Breast epithelium (tissue), 4 donors: ENCODE measurements at regions of chr11 and their contacts with region 1.

Region 1: DNA sequence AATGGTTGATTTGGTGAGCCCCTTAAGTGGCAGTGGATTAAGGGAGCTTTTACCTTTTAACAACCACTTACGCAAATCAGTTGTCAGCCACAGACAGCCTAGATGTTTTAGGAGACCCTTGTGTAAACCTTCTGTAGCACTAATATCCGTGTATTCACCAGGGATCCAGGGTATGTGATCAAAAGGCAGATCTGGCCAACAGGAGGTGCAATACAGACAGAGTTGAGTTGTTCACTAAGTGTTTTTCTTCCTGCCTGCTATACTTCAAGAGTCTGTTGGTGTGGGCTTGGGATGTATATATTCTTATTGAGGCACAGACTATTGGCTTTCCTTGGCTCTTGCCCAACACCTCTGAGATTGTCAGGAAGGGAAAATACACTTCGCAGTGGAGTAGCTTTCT is 175.1 kb downstream of the FAT3 start:
- DNase-seq: no peak
- H3K4me3 ChIP-seq: no peak overlapping the region
- H3K27ac ChIP-seq: no peak overlapping the region
- H3K4me1 ChIP-seq: no peaks in the 10 kb centered on the region
- H3K27me3 ChIP-seq: no peaks in the 10 kb centered on the region
- CTCF ChIP-seq: no peak
- POLR2A ChIP-seq: no peak

Region 2: GRCh38 chr11:90675990-90676389 is 1723.7 kb before region 1 on chr11:
- intact Hi-C with region 1: loop called (anchors 5 kb)
- DNase-seq: no peak
- H3K4me3 ChIP-seq: no peak overlapping the region
- H3K27ac ChIP-seq: no peak overlapping the region
- H3K4me1 ChIP-seq: no peaks in the 10 kb centered on the region
- H3K27me3 ChIP-seq: no peaks in the 10 kb centered on the region
- CTCF ChIP-seq: no peak
- POLR2A ChIP-seq: no peak

Region 3: DNA sequence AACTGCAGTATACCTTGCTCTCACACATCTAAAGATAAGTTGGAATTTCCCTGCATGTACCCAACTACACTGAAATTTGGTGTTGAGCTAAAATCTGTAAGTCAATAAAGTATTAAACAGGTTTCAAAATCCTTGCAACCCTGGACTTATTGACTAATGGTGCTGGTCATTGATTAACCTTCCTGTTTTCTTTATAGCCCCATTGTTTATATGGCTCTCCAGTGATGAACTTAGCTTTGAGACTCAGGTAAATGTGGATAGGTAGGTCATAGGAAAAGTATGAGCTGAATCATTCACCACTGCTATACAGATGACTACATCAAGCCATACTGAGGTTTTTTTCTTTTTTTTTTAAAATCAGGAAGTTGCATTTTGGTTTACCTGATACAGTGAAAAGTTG is 42.4 kb before region 1 on chr11:
- intact Hi-C with region 1: no loop called
- DNase-seq: no peak
- H3K4me3 ChIP-seq: no peak overlapping the region
- H3K27ac ChIP-seq: no peak overlapping the region
- H3K4me1 ChIP-seq: no peaks in the 10 kb centered on the region
- H3K27me3 ChIP-seq: no peaks in the 10 kb centered on the region
- CTCF ChIP-seq: no peak
- POLR2A ChIP-seq: no peak

Region 4: DNA sequence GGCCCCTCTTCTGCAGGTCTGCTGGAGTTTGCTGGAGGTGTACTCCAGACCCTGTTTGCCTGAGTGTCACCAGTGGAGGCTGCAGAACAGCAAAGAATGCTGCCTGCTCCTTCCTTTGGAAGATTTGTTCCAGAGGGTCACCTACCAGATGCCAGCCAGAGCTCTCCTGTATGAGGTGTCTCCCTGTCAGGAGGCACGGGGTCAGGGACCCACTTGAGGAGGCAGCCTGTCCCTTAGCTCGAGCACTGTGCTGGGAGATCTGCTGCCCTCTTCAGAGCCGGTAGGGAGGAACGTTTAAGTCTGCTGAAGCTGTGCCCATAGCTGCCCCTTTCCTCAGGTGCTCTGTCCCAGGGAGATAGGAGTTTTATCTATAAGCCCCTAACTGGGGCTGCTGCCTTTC is 32.8 kb after region 1 on chr11:
- intact Hi-C with region 1: loop called (anchors 2 kb)
- DNase-seq: no peak
- H3K4me3 ChIP-seq: no peak overlapping the region
- H3K27ac ChIP-seq: no peak overlapping the region
- H3K4me1 ChIP-seq: no peaks in the 10 kb centered on the region
- H3K27me3 ChIP-seq: no peaks in the 10 kb centered on the region
- CTCF ChIP-seq: no peak
- POLR2A ChIP-seq: no peak